T-cell (primary cell): ENCODE measurements at regions of chr4 and their contacts with region 1.

Region 1: GRCh38 chr4:165131247-165131832 is 18.7 kb upstream of the TMEM192 start:
- DNase-seq: peak; percentile 17 to 81 (median 63)
- ATAC-seq: peak; percentile 60 to 79 (median 76)
- H3K4me3 ChIP-seq: no peak overlapping the region
- H3K4me3 Mint-ChIP-seq: peak overlapping the region in 1 of 3 donors; percentile 17
- H3K27ac ChIP-seq: no peak overlapping the region
- H3K27ac Mint-ChIP-seq: no peak overlapping the region
- H3K4me1 ChIP-seq: no peaks in the 10 kb centered on the region
- H3K4me1 Mint-ChIP-seq: peaks cover 5 to 17% (median 9%) of the 10 kb centered on the region in 3 donors
- H3K27me3 ChIP-seq: peaks cover 0 to 8% of the 10 kb centered on the region in 2 experiments
- H3K27me3 Mint-ChIP-seq: peaks cover 14 to 23% of the 10 kb centered on the region in 2 donors

Region 2: DNA sequence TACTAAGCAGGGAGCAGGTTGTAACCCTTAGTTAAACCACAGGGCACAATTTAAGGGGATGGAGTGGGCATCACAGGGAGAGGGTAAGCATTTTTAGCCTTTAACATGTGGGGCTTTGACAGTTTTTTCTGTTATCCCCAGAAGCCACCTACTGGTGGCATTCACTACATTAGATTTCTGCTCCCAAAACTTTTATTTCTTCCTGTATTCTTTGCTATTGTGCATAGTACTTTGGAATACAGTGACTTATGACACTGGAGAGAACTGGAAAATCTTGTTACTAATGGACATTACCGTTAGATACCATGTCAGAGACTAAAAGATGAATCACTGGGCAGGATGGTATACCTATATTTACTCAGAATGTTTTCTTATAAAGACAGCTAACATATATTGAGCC is 70.4 kb before region 1 on chr4:
- CTCF ChIA-PET with region 1: no interaction called
- POLR2A ChIA-PET with region 1: no interaction called
- DNase-seq: no peak
- ATAC-seq: no peak
- H3K4me3 ChIP-seq: no peak overlapping the region
- H3K4me3 Mint-ChIP-seq: no peak overlapping the region
- H3K27ac ChIP-seq: no peak overlapping the region
- H3K27ac Mint-ChIP-seq: no peak overlapping the region
- H3K4me1 ChIP-seq: no peaks in the 10 kb centered on the region
- H3K4me1 Mint-ChIP-seq: no peaks in the 10 kb centered on the region
- H3K27me3 ChIP-seq: peaks cover 0 to 3% of the 10 kb centered on the region in 2 experiments
- H3K27me3 Mint-ChIP-seq: no peaks in the 10 kb centered on the region

Region 3: DNA sequence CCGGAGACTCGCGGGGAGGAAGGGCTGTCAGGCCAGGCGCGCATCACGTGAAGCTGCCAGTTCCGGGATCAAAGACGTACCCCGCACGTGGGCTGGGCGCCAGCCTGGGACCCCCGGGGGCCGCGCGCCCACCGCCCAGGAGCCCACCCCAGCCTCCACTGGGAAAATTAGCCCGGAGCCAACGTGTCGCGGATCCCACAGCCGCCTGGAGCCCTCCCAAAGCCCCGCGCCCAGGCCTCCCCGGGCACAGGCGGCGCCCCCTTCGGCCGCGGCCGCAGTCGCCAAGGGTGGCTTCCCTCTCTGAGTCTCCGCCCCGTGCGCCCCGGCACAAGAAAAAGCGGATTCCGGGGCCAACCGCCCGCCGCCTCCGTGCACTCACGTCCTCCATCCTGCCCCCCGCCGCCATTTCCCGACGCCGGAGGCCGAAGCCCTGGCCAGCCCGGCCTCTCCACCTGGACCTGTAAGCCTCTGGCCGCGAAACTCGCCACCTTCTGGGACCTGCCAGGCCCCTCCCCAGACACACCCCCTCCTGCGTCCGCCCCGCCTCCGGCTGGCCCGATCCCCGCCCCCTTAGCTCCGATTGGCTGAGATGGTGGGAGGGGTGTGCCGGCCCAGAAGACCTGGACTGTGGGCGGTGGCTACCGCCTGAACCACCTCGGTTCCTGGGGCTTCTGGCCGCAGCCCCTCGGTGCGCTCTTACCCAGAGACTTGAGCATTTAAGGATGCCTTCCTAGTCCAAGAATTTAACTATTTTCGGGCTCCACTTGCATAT is 18.8 kb before region 1 on chr4 and contains the start of gene TMEM192:
- CTCF ChIA-PET with region 1: interaction called, 8 to 14 read pairs
- POLR2A ChIA-PET with region 1: no interaction called
- DNase-seq: peak; percentile 75 to 92 (median 87)
- ATAC-seq: peak; percentile 95 to 98 (median 96)
- H3K4me3 ChIP-seq: peak within 1 kb of the TSS; percentile 74 to 96
- H3K4me3 Mint-ChIP-seq: peak within 1 kb of the TSS; percentile 85 to 95 (median 87)
- H3K27ac ChIP-seq: peak within 1 kb of the TSS; percentile 73
- H3K27ac Mint-ChIP-seq: peak within 1 kb of the TSS; percentile 84 to 93
- H3K4me1 ChIP-seq: peaks cover 4 to 9% of the 10 kb centered on the region in 2 experiments
- H3K4me1 Mint-ChIP-seq: peaks cover 19 to 30% (median 20%) of the 10 kb centered on the region in 3 donors
- H3K27me3 ChIP-seq: peaks cover 0 to 16% of the 10 kb centered on the region in 2 experiments
- H3K27me3 Mint-ChIP-seq: peaks cover 0 to 11% of the 10 kb centered on the region in 2 donors
- total RNA-seq, gene TMEM192: 8.6 to 9.5 (median 9.5) TPM

Region 4: GRCh38 chr4:165118256-165118909 is 13.0 kb before region 1 on chr4:
- CTCF ChIA-PET with region 1: interaction called, 14 to 19 read pairs
- POLR2A ChIA-PET with region 1: no interaction called
- DNase-seq: no peak
- ATAC-seq: no peak
- H3K4me3 ChIP-seq: no peak overlapping the region
- H3K4me3 Mint-ChIP-seq: no peak overlapping the region
- H3K27ac ChIP-seq: no peak overlapping the region
- H3K27ac Mint-ChIP-seq: no peak overlapping the region
- H3K4me1 ChIP-seq: peaks cover under 1 to 2% of the 10 kb centered on the region in 2 experiments
- H3K4me1 Mint-ChIP-seq: peaks cover under 1 to 5% (median 5%) of the 10 kb centered on the region in 3 donors
- H3K27me3 ChIP-seq: peaks cover 0 to 29% of the 10 kb centered on the region in 2 experiments
- H3K27me3 Mint-ChIP-seq: peaks cover 13 to 16% of the 10 kb centered on the region in 2 donors

Region 5: DNA sequence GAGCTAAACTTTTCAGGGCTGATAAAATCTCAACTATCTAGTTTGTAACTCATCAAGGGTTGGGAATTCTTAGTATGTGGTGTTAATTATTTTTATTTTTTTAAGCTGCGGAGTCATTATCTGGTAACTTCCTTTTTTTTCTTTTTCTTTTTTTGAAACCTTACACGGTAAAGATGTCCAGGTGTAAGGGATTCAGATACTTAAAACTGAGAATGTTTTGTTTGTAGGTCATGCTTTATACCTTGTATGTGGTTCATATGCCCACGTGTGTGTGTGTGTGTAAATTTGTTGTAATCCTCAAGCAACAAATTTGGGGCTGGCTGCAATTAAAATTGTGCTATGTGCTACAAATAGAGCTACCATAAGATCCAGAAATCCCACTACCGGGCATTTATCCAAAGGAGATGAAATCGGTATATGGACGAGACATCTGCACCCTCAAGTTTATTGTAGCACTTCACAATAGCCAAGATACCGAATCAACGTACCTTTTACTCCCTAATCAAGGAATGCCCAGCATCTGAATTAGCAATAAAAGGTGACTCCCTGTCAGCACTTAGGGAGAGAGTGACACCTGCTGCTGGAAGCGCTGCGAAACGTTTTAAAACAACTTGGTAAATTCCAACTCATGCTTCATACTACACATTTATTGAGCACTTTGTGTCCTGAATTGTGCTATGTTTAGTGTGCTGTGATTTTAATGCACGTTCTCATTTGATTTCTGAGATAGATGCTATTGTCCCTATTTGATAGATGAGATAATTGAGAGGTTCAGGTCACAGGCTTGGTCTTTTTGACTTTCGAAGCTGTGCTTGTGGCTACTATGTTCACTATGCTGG is 212.2 kb after region 1 on chr4:
- CTCF ChIA-PET with region 1: interaction called, 10 to 14 read pairs
- POLR2A ChIA-PET with region 1: no interaction called
- DNase-seq: peak in 11 of 35 experiments; percentile 4 to 41 (median 18)
- ATAC-seq: no peak
- H3K4me3 ChIP-seq: no peak overlapping the region
- H3K4me3 Mint-ChIP-seq: no peak overlapping the region
- H3K27ac ChIP-seq: no peak overlapping the region
- H3K27ac Mint-ChIP-seq: peak overlapping the region in 1 of 2 donors; percentile 1
- H3K4me1 ChIP-seq: no peaks in the 10 kb centered on the region
- H3K4me1 Mint-ChIP-seq: no peaks in the 10 kb centered on the region
- H3K27me3 ChIP-seq: no peaks in the 10 kb centered on the region
- H3K27me3 Mint-ChIP-seq: no peaks in the 10 kb centered on the region

Region 6: DNA sequence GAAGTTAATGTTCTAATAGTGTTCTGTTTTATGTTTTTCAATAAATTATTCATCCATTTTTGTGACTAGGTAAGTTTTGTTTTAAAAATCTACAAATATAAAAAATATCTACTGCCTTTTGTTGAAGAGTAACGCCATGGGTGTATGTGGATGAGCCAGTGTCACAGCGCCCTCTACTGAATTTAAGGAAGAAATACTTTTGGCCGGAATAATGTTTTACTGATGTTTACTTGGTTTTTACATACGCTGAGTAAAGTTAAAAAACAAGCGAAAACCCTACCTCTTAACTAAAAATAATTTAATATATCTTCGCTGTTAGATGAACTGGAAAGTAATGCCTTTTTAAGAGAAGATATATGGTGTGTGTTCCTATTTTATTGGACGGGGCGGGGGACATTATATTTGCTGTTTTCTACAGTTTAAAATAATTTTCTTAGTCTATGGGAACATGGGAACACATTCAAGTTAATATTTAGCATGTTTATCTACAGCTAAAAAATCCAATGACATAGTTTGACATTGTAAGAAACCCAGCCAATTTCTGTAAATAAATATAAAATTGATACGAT is 333.6 kb after region 1 on chr4:
- CTCF ChIA-PET with region 1: interaction called, 23 to 25 read pairs
- POLR2A ChIA-PET with region 1: no interaction called
- DNase-seq: peak in 11 of 35 experiments; percentile 1 to 71 (median 9)
- ATAC-seq: peak in 2 of 4 experiments; percentile 55 to 62
- H3K4me3 ChIP-seq: no peak overlapping the region
- H3K4me3 Mint-ChIP-seq: no peak overlapping the region
- H3K27ac ChIP-seq: no peak overlapping the region
- H3K27ac Mint-ChIP-seq: no peak overlapping the region
- H3K4me1 ChIP-seq: no peaks in the 10 kb centered on the region
- H3K4me1 Mint-ChIP-seq: no peaks in the 10 kb centered on the region
- H3K27me3 ChIP-seq: no peaks in the 10 kb centered on the region
- H3K27me3 Mint-ChIP-seq: peaks cover 0 to 4% of the 10 kb centered on the region in 2 donors

Region 7: DNA sequence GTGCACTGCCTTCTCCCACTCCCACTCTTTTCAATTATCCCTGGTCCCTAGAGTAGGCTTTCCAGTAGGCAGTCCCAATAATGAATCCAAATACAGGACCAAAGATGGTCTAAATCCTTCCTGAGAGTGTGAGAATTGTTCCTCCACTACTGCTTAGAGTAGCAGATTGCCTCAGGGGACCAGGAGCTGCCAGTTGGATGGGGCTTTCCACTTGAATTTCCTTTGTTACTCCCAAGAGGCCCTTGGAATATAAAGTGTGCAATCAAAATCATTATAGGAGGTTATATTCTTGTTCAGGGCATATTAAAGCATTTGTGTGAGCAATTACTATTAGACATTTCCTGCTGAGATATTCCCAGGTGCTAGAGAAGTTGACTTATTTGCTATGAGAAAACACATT is 585.1 kb after region 1 on chr4:
- CTCF ChIA-PET with region 1: no interaction called
- POLR2A ChIA-PET with region 1: no interaction called
- DNase-seq: no peak
- ATAC-seq: no peak
- H3K4me3 ChIP-seq: no peak overlapping the region
- H3K4me3 Mint-ChIP-seq: no peak overlapping the region
- H3K27ac ChIP-seq: no peak overlapping the region
- H3K27ac Mint-ChIP-seq: no peak overlapping the region
- H3K4me1 ChIP-seq: no peaks in the 10 kb centered on the region
- H3K4me1 Mint-ChIP-seq: no peaks in the 10 kb centered on the region
- H3K27me3 ChIP-seq: no peaks in the 10 kb centered on the region
- H3K27me3 Mint-ChIP-seq: no peaks in the 10 kb centered on the region

Region 8: GRCh38 chr4:166506051-166506450 is 1374.7 kb after region 1 on chr4:
- CTCF ChIA-PET with region 1: no interaction called
- POLR2A ChIA-PET with region 1: no interaction called
- DNase-seq: no peak
- ATAC-seq: no peak
- H3K4me3 ChIP-seq: no peak overlapping the region
- H3K4me3 Mint-ChIP-seq: no peak overlapping the region
- H3K27ac ChIP-seq: no peak overlapping the region
- H3K27ac Mint-ChIP-seq: no peak overlapping the region
- H3K4me1 ChIP-seq: no peaks in the 10 kb centered on the region
- H3K4me1 Mint-ChIP-seq: no peaks in the 10 kb centered on the region
- H3K27me3 ChIP-seq: no peaks in the 10 kb centered on the region
- H3K27me3 Mint-ChIP-seq: no peaks in the 10 kb centered on the region